ENCODE measurements at regions of chr6 and their contacts with region 1.

Region 1: DNA sequence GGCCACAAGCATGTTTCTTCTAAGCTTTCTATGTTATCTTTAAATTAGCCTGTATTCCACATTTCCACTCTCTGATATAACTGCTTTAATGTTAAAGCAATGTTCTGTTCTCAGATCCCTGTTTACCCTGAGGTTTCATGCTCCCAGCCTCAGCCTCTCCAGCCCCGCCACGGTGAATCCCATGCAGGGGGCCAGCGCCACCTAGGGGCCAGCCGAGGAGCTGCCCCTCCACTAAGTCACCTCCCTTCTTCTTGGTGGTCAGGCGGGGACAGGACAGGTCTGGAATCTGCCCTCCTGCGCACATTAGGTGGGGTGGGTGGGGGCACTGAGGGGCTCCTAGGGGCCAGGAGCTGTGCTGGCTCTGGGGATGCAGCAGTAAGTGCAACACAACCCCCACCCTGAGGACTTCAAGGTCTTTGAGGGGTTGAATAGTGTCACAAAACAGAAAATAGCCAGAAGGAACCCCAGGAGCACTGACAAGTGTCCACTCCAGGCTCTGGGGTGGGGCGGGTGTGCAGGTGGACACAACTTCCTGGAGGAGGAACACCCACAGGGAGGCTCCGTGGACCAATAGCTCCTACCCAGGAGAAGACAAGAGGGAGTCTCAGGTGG is 61.6 kb downstream of the RAB44 start:
- DNase-seq: peak; percentile 39 to 88 (median 63)
- ATAC-seq: peak; percentile 67
- H3K4me3 ChIP-seq: no peak overlapping the region
- H3K4me3 Mint-ChIP-seq: no peak overlapping the region
- H3K27ac ChIP-seq: no peak overlapping the region
- H3K27ac Mint-ChIP-seq: peak overlapping the region in 3 of 9 donors; percentile 3 to 43 (median 25)
- H3K4me1 ChIP-seq: peaks cover 16 to 36% of the 10 kb centered on the region in 2 donors
- H3K4me1 Mint-ChIP-seq: peaks cover 17 to 51% (median 33%) of the 10 kb centered on the region in 7 donors
- H3K27me3 ChIP-seq: no peaks in the 10 kb centered on the region
- H3K27me3 Mint-ChIP-seq: peaks cover 0 to 2% (median 0%) of the 10 kb centered on the region in 5 donors

Region 2: DNA sequence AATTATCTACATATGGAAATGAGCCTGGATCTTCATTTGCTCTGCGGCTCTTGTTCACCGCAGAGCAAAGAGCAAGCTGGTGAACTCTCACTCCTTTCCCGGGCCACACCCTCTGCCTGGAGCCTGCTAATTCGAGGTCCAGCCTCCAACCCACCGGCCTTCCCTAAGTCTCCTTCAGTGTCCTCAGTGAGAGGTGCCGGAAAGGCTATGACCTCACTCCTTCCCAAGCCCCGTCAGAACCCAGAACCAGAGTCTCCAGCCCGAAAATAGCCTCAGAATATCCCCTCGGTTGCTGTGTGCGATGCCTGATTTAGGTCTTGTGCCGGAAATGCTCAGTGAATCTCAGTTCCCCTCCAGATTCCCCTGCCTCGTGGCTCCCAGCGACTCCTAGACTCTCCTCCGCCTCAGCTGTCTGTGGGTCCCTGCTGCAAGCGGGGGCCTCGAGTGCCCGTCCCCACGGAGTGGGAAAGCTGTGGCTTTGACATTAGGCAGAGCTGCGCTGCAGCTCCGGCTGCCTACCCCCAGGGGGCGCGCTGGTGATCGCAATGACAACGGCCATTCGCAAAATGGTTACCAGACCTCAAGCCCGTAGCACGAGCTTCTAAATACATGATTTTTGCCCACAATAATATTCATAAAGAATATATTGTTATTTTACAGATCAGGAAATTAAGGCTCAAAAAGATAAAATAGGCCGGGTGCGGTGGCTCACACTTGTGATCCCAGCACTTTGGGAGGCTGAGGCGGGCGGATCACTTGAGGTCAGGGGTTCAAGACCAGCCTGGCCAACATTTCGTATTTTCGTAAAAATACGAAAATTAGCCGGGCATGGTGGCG is 418.4 kb before region 1 on chr6:
- CTCF ChIA-PET with region 1: interaction called, 7 read pairs
- POLR2A ChIA-PET with region 1: no interaction called
- intact Hi-C with region 1: loop called in 1 of 2 experiments (anchors 2 kb)
- DNase-seq: peak; percentile 45 to 74 (median 65)
- ATAC-seq: peak; percentile 95
- H3K4me3 ChIP-seq: no peak overlapping the region
- H3K4me3 Mint-ChIP-seq: peak overlapping the region; percentile 38 to 71 (median 64)
- H3K27ac ChIP-seq: no peak overlapping the region
- H3K27ac Mint-ChIP-seq: peak overlapping the region in 4 of 9 donors; percentile 4 to 51 (median 39)
- H3K4me1 ChIP-seq: peaks cover 4 to 5% of the 10 kb centered on the region in 2 donors
- H3K4me1 Mint-ChIP-seq: peaks cover 5 to 25% (median 13%) of the 10 kb centered on the region in 7 donors
- H3K27me3 ChIP-seq: no peaks in the 10 kb centered on the region
- H3K27me3 Mint-ChIP-seq: peaks cover 7 to 44% (median 12%) of the 10 kb centered on the region in 5 donors

Region 3: GRCh38 chr6:36615018-36615761 is 144.1 kb before region 1 on chr6:
- CTCF ChIA-PET with region 1: interaction called, 10 read pairs
- POLR2A ChIA-PET with region 1: no interaction called
- intact Hi-C with region 1: loop called (anchors 1 kb)
- DNase-seq: peak in 8 of 9 donors; percentile 21 to 62 (median 50)
- ATAC-seq: peak; percentile 83
- H3K4me3 ChIP-seq: no peak overlapping the region
- H3K4me3 Mint-ChIP-seq: no peak overlapping the region
- H3K27ac ChIP-seq: no peak overlapping the region
- H3K27ac Mint-ChIP-seq: peak overlapping the region in 7 of 9 donors; percentile 14 to 78 (median 60)
- H3K4me1 ChIP-seq: no peaks in the 10 kb centered on the region
- H3K4me1 Mint-ChIP-seq: peaks cover 7 to 26% (median 18%) of the 10 kb centered on the region in 7 donors
- H3K27me3 ChIP-seq: no peaks in the 10 kb centered on the region
- H3K27me3 Mint-ChIP-seq: no peaks in the 10 kb centered on the region

Region 4: DNA sequence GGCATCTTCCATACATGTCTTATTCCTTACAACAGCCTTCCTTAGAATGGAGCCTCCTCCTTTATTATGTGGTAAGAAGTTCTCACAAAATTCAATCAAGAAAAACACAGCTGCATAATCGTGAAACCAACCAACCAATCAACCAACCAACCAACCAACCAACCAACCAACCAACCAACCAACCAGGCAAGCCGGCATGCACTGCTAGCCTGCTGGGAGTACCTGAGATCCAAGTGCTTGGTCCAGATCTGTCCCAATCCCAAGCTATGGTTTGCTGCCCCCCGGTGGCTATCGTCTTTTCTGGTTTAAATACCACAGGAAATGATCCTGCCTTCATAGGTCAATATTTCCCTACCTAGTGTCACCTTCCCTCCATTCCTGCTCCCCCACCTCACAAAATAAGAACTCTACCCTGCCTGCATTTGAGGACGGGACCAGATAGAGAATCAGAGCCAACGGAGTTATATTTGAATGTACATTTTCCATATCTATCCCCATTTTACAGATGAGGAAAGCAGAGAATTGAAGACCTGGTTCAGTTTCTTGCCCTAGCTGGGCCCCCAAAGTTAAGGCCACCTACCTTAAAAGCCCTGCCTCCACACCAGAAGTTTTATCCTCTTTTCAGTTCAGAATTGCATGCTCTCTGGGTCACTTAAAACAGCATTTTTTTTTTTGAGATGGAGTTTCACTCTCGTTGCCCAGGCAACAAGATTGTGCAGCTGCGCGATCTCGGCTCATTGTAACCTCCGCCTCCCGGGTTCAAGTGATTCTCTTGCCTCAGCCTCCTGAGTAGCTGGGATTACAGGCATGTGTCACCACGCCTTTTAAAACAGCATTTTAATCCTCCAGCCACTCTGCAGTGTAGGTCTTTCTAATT is 34.5 kb before region 1 on chr6:
- CTCF ChIA-PET with region 1: no interaction called
- POLR2A ChIA-PET with region 1: no interaction called
- intact Hi-C with region 1: loop called in 1 of 2 experiments (anchors 5 kb)
- DNase-seq: peak in 1 of 9 donors; percentile 58
- ATAC-seq: no peak
- H3K4me3 ChIP-seq: no peak overlapping the region
- H3K4me3 Mint-ChIP-seq: no peak overlapping the region
- H3K27ac ChIP-seq: no peak overlapping the region
- H3K27ac Mint-ChIP-seq: peak overlapping the region in 1 of 9 donors; percentile 8
- H3K4me1 ChIP-seq: peaks cover 0 to 5% of the 10 kb centered on the region in 2 donors
- H3K4me1 Mint-ChIP-seq: peaks cover 7 to 44% (median 11%) of the 10 kb centered on the region in 7 donors
- H3K27me3 ChIP-seq: no peaks in the 10 kb centered on the region
- H3K27me3 Mint-ChIP-seq: no peaks in the 10 kb centered on the region

Measured in naive thymus-derived CD4-positive, alpha-beta T cell (primary cell).